SK-N-SH (cell line): ENCODE measurements at regions of chr7 and their contacts with region 1.

Region 1: GRCh38 chr7:70506434-70506833 is 625.5 kb upstream of the GALNT17 start:
- DNase-seq: peak; percentile 82
- H3K4me3 ChIP-seq: no peak overlapping the region
- H3K27ac ChIP-seq: peak overlapping the region in 1 of 2 experiments; percentile 77; a peak in 2 of 4 replicates
- H3K4me1 ChIP-seq: peaks cover 0 to 23% of the 10 kb centered on the region in 2 experiments; a peak in 1 of 4 replicates
- H3K27me3 ChIP-seq: no peaks in the 10 kb centered on the region
- CTCF ChIP-seq: peak; percentile 40
- EP300 ChIP-seq: peak in 1 of 2 experiments; percentile 90; a peak in 2 of 4 replicates
- RAD21 ChIP-seq: peak; percentile 98

Region 2: DNA sequence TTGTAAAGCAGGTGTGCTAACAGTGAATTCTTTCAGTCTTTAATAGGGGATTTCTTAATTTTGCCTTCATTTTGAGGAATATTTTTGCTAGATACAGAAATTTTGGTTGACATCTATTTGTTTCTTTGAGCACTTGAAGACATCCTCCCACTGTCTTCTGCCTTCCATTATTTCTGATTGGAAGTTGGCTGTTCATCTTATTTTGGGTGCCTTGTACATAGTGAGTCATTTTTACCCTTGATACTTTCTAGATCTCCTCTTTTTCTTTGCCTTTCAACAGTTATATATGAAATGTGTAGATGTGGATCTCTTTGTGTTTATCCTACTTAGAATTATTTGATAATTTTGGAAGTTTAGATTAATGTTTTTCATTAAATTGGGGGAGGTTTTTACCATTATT is 277.2 kb before region 1 on chr7:
- CTCF ChIA-PET with region 1: interaction called, 11 read pairs
- POLR2A ChIA-PET with region 1: no interaction called
- DNase-seq: no peak
- H3K4me3 ChIP-seq: no peak overlapping the region
- H3K27ac ChIP-seq: no peak overlapping the region
- H3K4me1 ChIP-seq: no peaks in the 10 kb centered on the region
- H3K27me3 ChIP-seq: no peaks in the 10 kb centered on the region
- CTCF ChIP-seq: no peak
- EP300 ChIP-seq: no peak
- RAD21 ChIP-seq: no peak

Region 3: GRCh38 chr7:70380421-70381015 is 125.9 kb before region 1 on chr7:
- CTCF ChIA-PET with region 1: interaction called, 10 read pairs
- POLR2A ChIA-PET with region 1: interaction called, 4 read pairs
- DNase-seq: peak; percentile 19
- H3K4me3 ChIP-seq: peak overlapping the region in 1 of 2 experiments; percentile 20; a peak in 2 of 4 replicates
- H3K27ac ChIP-seq: peak overlapping the region; percentile 87 to 88
- H3K4me1 ChIP-seq: peaks cover 17 to 57% of the 10 kb centered on the region in 2 experiments
- H3K27me3 ChIP-seq: no peaks in the 10 kb centered on the region
- CTCF ChIP-seq: no peak
- EP300 ChIP-seq: peak; percentile 54 to 99
- RAD21 ChIP-seq: no peak

Region 4: GRCh38 chr7:70474639-70475234 is 31.7 kb before region 1 on chr7:
- CTCF ChIA-PET with region 1: interaction called, 12 read pairs
- POLR2A ChIA-PET with region 1: no interaction called
- DNase-seq: peak; percentile 58
- H3K4me3 ChIP-seq: no peak overlapping the region
- H3K27ac ChIP-seq: peak overlapping the region in 1 of 2 experiments; percentile 99; a peak in 2 of 4 replicates
- H3K4me1 ChIP-seq: peaks cover 6 to 70% of the 10 kb centered on the region in 2 experiments; a peak in 3 of 4 replicates
- H3K27me3 ChIP-seq: no peaks in the 10 kb centered on the region
- CTCF ChIP-seq: no peak
- EP300 ChIP-seq: peak in 1 of 2 experiments; percentile 66; a peak in 1 of 4 replicates
- RAD21 ChIP-seq: no peak; the same call in 1 of the 2 replicates

Region 5: GRCh38 chr7:70523249-70523988 is 17.0 kb after region 1 on chr7:
- CTCF ChIA-PET with region 1: interaction called, 15 read pairs
- POLR2A ChIA-PET with region 1: no interaction called
- DNase-seq: no peak
- H3K4me3 ChIP-seq: no peak overlapping the region
- H3K27ac ChIP-seq: no peak overlapping the region
- H3K4me1 ChIP-seq: peaks cover 0 to 13% of the 10 kb centered on the region in 2 experiments; a peak in 3 of 4 replicates
- H3K27me3 ChIP-seq: no peaks in the 10 kb centered on the region
- CTCF ChIP-seq: no peak
- EP300 ChIP-seq: no peak
- RAD21 ChIP-seq: 0 out of 2 replicates have a peak, but pooled peaks have one; percentile 11